Mammary epithelial cell (primary cell): ENCODE measurements at regions of chr12 and their contacts with region 1.

Region 1: DNA sequence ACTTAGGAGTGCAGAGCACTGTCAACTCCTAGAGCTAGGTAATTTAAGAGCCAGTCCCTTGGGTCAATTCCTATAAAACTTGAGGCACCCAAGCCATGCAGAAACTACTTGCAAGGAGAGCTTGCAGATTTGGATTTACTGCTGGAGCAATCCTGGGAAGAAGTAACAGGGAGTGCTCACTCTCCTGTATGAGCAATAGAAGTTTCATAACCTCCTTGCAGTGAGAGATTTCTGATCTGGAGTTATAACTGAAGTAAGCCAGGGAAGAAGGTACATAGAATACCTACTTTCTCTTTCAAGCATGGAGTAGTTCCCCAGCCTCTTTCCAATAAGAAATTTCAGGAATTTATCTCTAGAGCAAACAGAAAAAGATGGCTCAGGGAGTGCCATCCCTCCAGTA is 650.1 kb upstream of the USP15 start:
- DNase-seq: no peak
- H3K4me3 ChIP-seq: no peak overlapping the region
- H3K27ac ChIP-seq: no peak overlapping the region
- H3K4me1 ChIP-seq: no peaks in the 10 kb centered on the region
- H3K27me3 ChIP-seq: no peaks in the 10 kb centered on the region
- CTCF ChIP-seq: no peak

Region 2: GRCh38 chr12:61554268-61555008 is 55.7 kb before region 1 on chr12:
- CTCF ChIA-PET with region 1: no interaction called
- dilution Hi-C with region 1: no loop called
- in situ Hi-C with region 1: no loop called
- intact Hi-C with region 1: loop called (anchors 10 kb)
- DNase-seq: peak; percentile 90
- H3K4me3 ChIP-seq: peak overlapping the region; percentile 8 to 39 (median 26)
- H3K27ac ChIP-seq: peak overlapping the region; percentile 84
- H3K4me1 ChIP-seq: peaks cover 18% of the 10 kb centered on the region
- H3K27me3 ChIP-seq: no peaks in the 10 kb centered on the region
- CTCF ChIP-seq: no peak